Naive thymus-derived CD4-positive, alpha-beta T cell (primary cell): ENCODE measurements at regions of chr9 and their contacts with region 1.

Region 1: DNA sequence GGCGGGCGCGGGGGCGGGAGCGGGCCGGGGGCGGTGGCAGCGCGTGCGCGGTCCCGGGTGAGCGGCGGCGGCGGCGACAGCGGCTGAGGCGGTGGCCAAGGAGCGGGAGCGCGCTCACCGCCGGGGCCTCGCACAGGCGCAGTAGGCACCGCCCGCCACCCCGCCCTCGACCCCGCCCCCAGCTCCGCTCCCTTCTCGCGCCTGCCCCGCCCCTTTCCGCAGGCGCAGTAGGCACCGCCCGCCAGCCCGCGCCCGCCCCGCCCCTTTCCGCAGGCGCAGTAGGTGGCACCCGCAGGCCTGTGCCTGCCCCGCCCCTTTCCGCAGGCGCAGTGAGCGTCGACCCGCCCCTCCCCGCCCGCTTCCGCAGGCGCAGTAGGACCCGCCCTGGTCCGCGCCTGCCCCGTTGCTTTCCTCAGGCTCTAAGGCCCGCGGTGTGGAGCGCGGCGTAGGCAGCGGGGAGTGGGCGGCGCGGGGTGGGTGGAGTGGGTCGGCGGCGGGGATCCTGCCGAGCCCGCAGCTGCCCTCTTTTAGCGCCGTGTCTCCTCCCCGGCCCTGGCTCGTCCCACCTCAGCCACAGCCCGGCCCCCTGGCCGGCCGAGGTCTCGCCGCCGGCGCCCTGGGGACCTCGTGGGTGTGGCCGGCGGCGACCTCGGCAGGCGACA is at the start of gene CAMSAP1:
- DNase-seq: peak; percentile 89 to 97 (median 93)
- ATAC-seq: peak; percentile 91
- H3K4me3 ChIP-seq: peak within 1 kb of the TSS; percentile 69
- H3K4me3 Mint-ChIP-seq: peak within 1 kb of the TSS; percentile 85 to 94 (median 90)
- H3K27ac ChIP-seq: peak within 1 kb of the TSS; percentile 89
- H3K27ac Mint-ChIP-seq: peak within 1 kb of the TSS; percentile 68 to 92 (median 83)
- H3K4me1 ChIP-seq: peaks cover 21% of the 10 kb centered on the region in 2 donors
- H3K4me1 Mint-ChIP-seq: peaks cover 33 to 74% (median 63%) of the 10 kb centered on the region in 7 donors
- H3K27me3 ChIP-seq: no peaks in the 10 kb centered on the region
- H3K27me3 Mint-ChIP-seq: no peaks in the 10 kb centered on the region
- total RNA-seq, gene CAMSAP1: 16.4 to 34.3 (median 23.6) TPM

Region 2: DNA sequence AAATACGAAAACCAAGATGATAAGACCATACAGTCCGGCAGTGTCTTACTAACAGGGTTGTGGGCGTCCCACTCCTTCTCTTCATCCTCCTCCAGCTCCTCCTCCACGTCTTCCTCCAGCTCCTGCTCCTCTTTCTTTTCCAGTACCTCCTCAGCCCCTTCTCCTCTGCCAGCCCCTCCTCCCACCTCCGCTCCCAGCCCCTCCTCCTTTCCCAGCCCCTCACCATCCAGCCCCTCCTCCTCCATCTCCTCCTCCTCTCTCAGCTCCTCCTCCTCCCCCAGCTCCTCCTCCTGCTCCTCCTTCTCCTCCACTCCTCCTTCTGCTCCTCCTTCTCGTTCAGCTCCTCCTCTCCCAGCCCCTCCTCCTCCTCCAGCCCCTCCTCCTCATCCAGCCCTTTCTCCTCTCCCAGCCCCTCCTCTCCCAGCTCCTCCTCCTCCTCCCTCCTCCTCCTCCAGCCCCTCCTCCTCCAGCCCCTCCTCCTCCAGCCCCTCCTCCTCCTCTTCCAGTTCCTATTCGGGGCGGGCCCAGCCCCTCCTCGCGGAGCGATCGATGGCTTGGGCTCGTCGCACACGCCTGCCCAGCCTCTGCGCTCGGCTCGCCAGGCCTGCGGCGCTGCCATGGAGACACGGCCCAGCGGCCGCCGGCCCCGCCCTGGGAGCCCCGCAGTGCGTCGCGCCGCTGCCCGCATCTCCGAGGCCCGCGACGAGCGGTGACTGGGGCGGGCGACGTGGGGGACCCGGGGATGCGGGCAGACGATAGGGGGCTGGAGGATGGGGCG is 1882.5 kb before region 1 on chr9 and contains the start of gene BRD3OS:
- CTCF ChIA-PET with region 1: no interaction called
- POLR2A ChIA-PET with region 1: no interaction called
- intact Hi-C with region 1: loop called in 1 of 2 experiments (anchors 10 kb)
- DNase-seq: peak; percentile 80 to 95 (median 91)
- ATAC-seq: peak; percentile 98
- H3K4me3 ChIP-seq: peak within 1 kb of the TSS; percentile 89
- H3K4me3 Mint-ChIP-seq: peak within 1 kb of the TSS; percentile 61 to 85 (median 80)
- H3K27ac ChIP-seq: peak within 1 kb of the TSS; percentile 75
- H3K27ac Mint-ChIP-seq: peak within 1 kb of the TSS; percentile 48 to 86 (median 78)
- H3K4me1 ChIP-seq: peaks cover 5 to 7% of the 10 kb centered on the region in 2 donors
- H3K4me1 Mint-ChIP-seq: peaks cover 0 to 21% (median 12%) of the 10 kb centered on the region in 7 donors
- H3K27me3 ChIP-seq: no peaks in the 10 kb centered on the region
- H3K27me3 Mint-ChIP-seq: no peaks in the 10 kb centered on the region
- total RNA-seq, gene BRD3OS: 8.3 to 19.3 (median 12.7) TPM

Region 3: GRCh38 chr9:134585746-134586706 is 1321.5 kb before region 1 on chr9:
- CTCF ChIA-PET with region 1: interaction called, 10 read pairs
- POLR2A ChIA-PET with region 1: no interaction called
- intact Hi-C with region 1: no loop called
- DNase-seq: no peak
- ATAC-seq: no peak
- H3K4me3 ChIP-seq: no peak overlapping the region
- H3K4me3 Mint-ChIP-seq: no peak overlapping the region
- H3K27ac ChIP-seq: no peak overlapping the region
- H3K27ac Mint-ChIP-seq: no peak overlapping the region
- H3K4me1 ChIP-seq: no peaks in the 10 kb centered on the region
- H3K4me1 Mint-ChIP-seq: peaks cover 0 to 5% (median 0%) of the 10 kb centered on the region in 7 donors
- H3K27me3 ChIP-seq: no peaks in the 10 kb centered on the region
- H3K27me3 Mint-ChIP-seq: peaks cover 3 to 18% (median 8%) of the 10 kb centered on the region in 5 donors

Region 4: GRCh38 chr9:135887585-135888050 is 19.9 kb before region 1 on chr9:
- CTCF ChIA-PET with region 1: interaction called, 3 read pairs
- POLR2A ChIA-PET with region 1: interaction called, 4 read pairs
- intact Hi-C with region 1: loop called in 1 of 2 experiments (anchors 1 kb)
- DNase-seq: peak; percentile 40 to 75 (median 66)
- ATAC-seq: peak; percentile 91
- H3K4me3 ChIP-seq: peak overlapping the region; percentile 38
- H3K4me3 Mint-ChIP-seq: peak overlapping the region; percentile 68 to 94 (median 84)
- H3K27ac ChIP-seq: peak overlapping the region; percentile 69
- H3K27ac Mint-ChIP-seq: peak overlapping the region; percentile 66 to 96 (median 88)
- H3K4me1 ChIP-seq: peaks cover 11 to 23% of the 10 kb centered on the region in 2 donors
- H3K4me1 Mint-ChIP-seq: peaks cover 46 to 87% (median 77%) of the 10 kb centered on the region in 7 donors
- H3K27me3 ChIP-seq: no peaks in the 10 kb centered on the region
- H3K27me3 Mint-ChIP-seq: no peaks in the 10 kb centered on the region

Region 5: GRCh38 chr9:136109351-136110081 is 202.0 kb after region 1 on chr9:
- CTCF ChIA-PET with region 1: no interaction called
- POLR2A ChIA-PET with region 1: no interaction called
- intact Hi-C with region 1: loop called (anchors 1 to 2 kb)
- DNase-seq: peak; percentile 80 to 93 (median 89)
- ATAC-seq: peak; percentile 96
- H3K4me3 ChIP-seq: peak overlapping the region; percentile 69
- H3K4me3 Mint-ChIP-seq: peak overlapping the region; percentile 78 to 91 (median 88)
- H3K27ac ChIP-seq: peak overlapping the region; percentile 82
- H3K27ac Mint-ChIP-seq: peak overlapping the region; percentile 64 to 93 (median 91)
- H3K4me1 ChIP-seq: peaks cover 60 to 75% of the 10 kb centered on the region in 2 donors
- H3K4me1 Mint-ChIP-seq: peaks cover 42 to 82% (median 64%) of the 10 kb centered on the region in 7 donors
- H3K27me3 ChIP-seq: no peaks in the 10 kb centered on the region
- H3K27me3 Mint-ChIP-seq: no peaks in the 10 kb centered on the region

Region 6: GRCh38 chr9:136400038-136400834 is 492.7 kb after region 1 on chr9 and contains the start of gene SNAPC4:
- CTCF ChIA-PET with region 1: no interaction called
- POLR2A ChIA-PET with region 1: no interaction called
- intact Hi-C with region 1: loop called in 1 of 2 experiments (anchors 5 kb)
- DNase-seq: peak; percentile 77 to 93 (median 87)
- ATAC-seq: peak; percentile 91
- H3K4me3 ChIP-seq: peak within 1 kb of the TSS; percentile 62
- H3K4me3 Mint-ChIP-seq: peak within 1 kb of the TSS; percentile 83 to 90 (median 86)
- H3K27ac ChIP-seq: peak within 1 kb of the TSS; percentile 62
- H3K27ac Mint-ChIP-seq: peak within 1 kb of the TSS in 8 of 9 donors; percentile 26 to 78 (median 76)
- H3K4me1 ChIP-seq: peaks cover 33 to 38% of the 10 kb centered on the region in 2 donors
- H3K4me1 Mint-ChIP-seq: peaks cover 30 to 61% (median 45%) of the 10 kb centered on the region in 7 donors
- H3K27me3 ChIP-seq: no peaks in the 10 kb centered on the region
- H3K27me3 Mint-ChIP-seq: no peaks in the 10 kb centered on the region
- total RNA-seq, gene SNAPC4: 10.0 to 16.3 (median 12.8) TPM